Activated T-helper 2 cell treated with anti-CD3 and anti-CD28 coated beads, Interferon-gamma antibody, Interleukin-2, Interleukin-4, amounts not matched to agents 10 μg/mL and 5 μg/mL and 100 μg/mL, durations not matched to agents 14 hours and 24 hours and 36 hours (primary cell): ENCODE measurements at regions of chr9 and their contacts with region 1.

Region 1: DNA sequence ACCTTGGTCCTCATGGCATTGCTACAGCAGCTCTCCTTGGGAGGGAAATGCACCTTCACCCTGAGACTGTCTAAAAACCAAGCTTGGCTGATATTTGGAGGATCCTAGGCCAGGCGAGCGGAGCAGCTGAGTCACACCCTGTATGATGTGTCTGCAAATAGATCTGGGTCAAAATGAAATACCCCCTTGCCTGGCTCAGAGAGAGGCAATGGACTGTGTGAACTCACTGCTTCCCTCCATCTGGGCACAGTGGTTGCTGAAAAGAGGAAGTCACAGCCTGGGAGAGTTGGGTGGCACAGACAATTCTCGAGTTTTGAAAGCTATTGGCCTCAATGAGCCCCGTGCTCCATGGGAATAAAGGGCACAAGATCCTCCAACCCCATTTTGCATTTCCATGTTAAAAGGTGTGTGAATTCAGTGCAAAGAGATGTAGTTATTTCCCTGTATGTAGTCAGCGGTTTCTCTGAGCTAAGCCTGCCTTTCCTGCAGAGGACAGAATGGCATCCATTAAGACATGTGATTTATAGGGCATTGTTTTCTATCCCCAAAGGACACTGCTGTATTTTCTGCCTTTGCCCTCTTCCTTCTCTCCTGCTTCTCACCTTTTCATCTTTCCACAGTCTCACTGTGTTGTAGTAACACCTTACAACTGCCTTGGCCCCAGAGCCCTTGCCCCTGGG is 177.2 kb downstream of the GADD45G start:
- DNase-seq: no peak
- H3K4me3 Mint-ChIP-seq: no peak overlapping the region
- H3K27ac Mint-ChIP-seq: no peak overlapping the region
- H3K4me1 Mint-ChIP-seq: peaks cover 11% of the 10 kb centered on the region
- H3K27me3 Mint-ChIP-seq: peaks cover 34% of the 10 kb centered on the region

Region 2: DNA sequence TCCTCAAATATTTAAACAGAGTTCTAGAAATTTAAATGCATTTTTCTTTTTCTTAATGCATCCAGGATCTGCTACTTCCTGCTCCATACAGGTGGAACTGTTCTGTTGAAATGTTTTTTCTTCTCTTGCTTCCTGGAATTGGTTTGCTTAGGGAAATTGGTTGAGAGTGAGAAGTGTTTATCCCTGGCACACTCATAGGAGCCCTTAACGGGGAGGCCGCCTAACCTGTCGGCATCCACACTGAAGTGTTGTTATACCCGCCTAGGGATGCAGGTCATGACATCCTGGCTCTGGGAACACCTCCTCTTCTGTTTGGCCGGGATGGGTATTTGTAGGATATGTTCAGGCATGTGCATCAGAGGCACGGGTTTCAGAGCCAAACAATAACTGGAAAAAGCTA is 62.6 kb after region 1 on chr9:
- intact Hi-C with region 1: loop called (anchors 10 kb)
- DNase-seq: no peak
- H3K4me3 Mint-ChIP-seq: no peak overlapping the region
- H3K27ac Mint-ChIP-seq: no peak overlapping the region
- H3K4me1 Mint-ChIP-seq: no peaks in the 10 kb centered on the region
- H3K27me3 Mint-ChIP-seq: peaks cover 14% of the 10 kb centered on the region

Region 3: GRCh38 chr9:90741036-90741435 is 959.1 kb after region 1 on chr9:
- intact Hi-C with region 1: no loop called
- DNase-seq: no peak
- H3K4me3 Mint-ChIP-seq: no peak overlapping the region
- H3K27ac Mint-ChIP-seq: no peak overlapping the region
- H3K4me1 Mint-ChIP-seq: no peaks in the 10 kb centered on the region
- H3K27me3 Mint-ChIP-seq: peaks cover 3% of the 10 kb centered on the region